H1 (cell line): ENCODE measurements at regions of chr6 and their contacts with region 1.

Region 1: GRCh38 chr6:24991810-24992467 is 56.2 kb upstream of the RIPOR2 start:
- DNase-seq: no peak
- H3K4me3 ChIP-seq: no peak overlapping the region
- H3K27ac ChIP-seq: no peak overlapping the region
- H3K4me1 ChIP-seq: peaks cover 0 to 7% (median 6%) of the 10 kb centered on the region in 4 experiments; a peak in 5 of 7 replicates
- H3K27me3 ChIP-seq: no peaks in the 10 kb centered on the region
- CTCF ChIP-seq: peak; percentile 38 to 84 (median 77)
- EP300 ChIP-seq: no peak
- POLR2A ChIP-seq: no peak
- RAD21 ChIP-seq: peak; percentile 76 to 89

Region 2: DNA sequence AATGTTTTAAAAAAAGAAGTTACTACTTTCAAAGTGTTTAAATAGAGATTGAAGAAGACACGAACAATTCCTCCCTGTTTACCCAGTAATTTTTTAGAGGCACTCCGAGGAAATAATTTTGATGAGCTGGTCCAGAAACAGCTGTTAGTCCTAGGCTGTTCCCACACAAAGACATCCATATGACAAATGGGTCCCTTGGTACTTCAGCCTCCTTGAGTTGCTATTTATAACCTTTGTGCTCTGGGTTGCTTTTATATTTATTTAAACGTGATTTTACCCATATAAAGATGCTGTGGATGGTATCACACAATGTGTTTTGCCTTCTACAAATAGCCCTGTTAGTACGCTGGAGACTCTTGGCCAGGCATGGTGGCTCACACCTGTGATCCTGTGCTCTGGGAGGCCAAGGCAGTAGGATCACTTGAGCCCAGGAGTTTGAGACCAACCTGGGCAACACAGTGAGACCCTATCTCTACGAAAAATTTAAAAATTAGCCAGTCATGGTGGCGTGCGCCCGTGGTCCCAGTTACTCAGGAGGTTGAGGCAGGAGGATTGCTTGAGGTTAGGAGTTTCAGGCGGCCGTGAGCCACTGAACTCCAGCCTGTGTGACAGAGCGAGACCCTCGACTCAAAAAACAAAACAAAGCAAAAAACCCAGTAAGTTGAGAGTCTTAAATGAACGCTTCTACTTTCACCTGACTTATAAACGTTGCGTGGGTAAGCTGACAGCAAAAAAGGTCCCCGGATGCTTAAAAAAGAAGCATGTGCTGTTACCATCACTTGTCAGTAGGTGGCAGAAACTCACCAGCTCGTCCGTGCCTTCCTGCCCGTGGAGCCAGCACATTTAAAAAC is 136.3 kb before region 1 on chr6:
- CTCF ChIA-PET with region 1: interaction called, 55 read pairs
- POLR2A ChIA-PET with region 1: interaction called, 3 read pairs
- DNase-seq: peak; percentile 41 to 59
- H3K4me3 ChIP-seq: no peak overlapping the region
- H3K27ac ChIP-seq: no peak overlapping the region
- H3K4me1 ChIP-seq: no peaks in the 10 kb centered on the region
- H3K27me3 ChIP-seq: no peaks in the 10 kb centered on the region
- CTCF ChIP-seq: peak; percentile 81 to 85 (median 83)
- EP300 ChIP-seq: no peak
- POLR2A ChIP-seq: no peak
- RAD21 ChIP-seq: peak; percentile 96 to 97

Region 3: GRCh38 chr6:24883618-24884017 is 108.3 kb before region 1 on chr6:
- CTCF ChIA-PET with region 1: interaction called, 20 read pairs
- POLR2A ChIA-PET with region 1: interaction called, 3 read pairs
- DNase-seq: no peak
- H3K4me3 ChIP-seq: no peak overlapping the region
- H3K27ac ChIP-seq: no peak overlapping the region
- H3K4me1 ChIP-seq: peaks cover 0 to 8% (median 3%) of the 10 kb centered on the region in 4 experiments; a peak in 3 of 7 replicates
- H3K27me3 ChIP-seq: no peaks in the 10 kb centered on the region
- CTCF ChIP-seq: no peak
- EP300 ChIP-seq: no peak
- POLR2A ChIP-seq: no peak
- RAD21 ChIP-seq: no peak

Region 4: DNA sequence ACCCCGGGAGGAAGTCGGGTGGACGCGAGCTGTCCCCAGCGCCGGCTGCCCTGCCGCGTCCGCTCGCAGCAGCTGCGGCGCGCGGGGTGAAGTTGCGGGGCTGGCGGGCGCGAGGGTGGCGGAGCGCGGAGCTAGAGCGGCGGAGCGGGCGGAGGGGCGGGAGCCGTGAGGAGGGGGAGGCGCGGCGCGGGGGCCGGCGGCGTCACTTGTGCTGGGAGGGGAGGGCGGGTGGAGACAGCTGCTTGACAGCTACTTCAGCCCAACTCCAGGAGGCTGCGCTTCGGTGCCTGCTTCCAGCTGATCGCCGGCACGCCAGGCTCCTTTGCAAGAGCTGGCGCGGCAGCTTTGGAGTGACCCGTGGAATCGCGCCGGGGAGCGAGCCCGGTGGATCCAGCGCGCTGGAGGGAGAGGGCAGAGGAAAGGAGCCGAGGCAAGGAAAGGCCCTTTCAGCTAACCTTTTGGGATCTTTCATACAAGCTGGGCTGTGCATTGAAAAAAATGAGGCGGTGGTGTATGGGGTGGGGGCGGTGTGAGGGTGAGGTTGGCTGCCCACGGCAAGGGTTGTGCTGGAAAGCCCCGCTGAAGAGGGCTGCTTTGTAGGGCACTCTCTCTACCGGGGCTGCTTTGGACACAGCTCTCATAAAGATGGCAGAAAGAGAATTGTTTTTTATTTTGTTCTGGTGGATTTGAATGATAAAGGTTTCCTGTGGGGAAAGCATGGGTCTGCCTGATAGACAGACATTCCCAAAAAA is 80.8 kb before region 1 on chr6:
- CTCF ChIA-PET with region 1: interaction called, 45 read pairs
- POLR2A ChIA-PET with region 1: interaction called, 6 read pairs
- DNase-seq: no peak
- H3K4me3 ChIP-seq: peak overlapping the region; percentile 57 to 79 (median 68)
- H3K27ac ChIP-seq: no peak overlapping the region
- H3K4me1 ChIP-seq: peaks cover 3 to 15% (median 12%) of the 10 kb centered on the region in 4 experiments; a peak in 6 of 7 replicates
- H3K27me3 ChIP-seq: peaks cover 0 to 29% (median 20%) of the 10 kb centered on the region in 4 experiments; a peak in 5 of 7 replicates
- CTCF ChIP-seq: no peak
- EP300 ChIP-seq: no peak
- POLR2A ChIP-seq: no peak
- RAD21 ChIP-seq: no peak

Region 5: DNA sequence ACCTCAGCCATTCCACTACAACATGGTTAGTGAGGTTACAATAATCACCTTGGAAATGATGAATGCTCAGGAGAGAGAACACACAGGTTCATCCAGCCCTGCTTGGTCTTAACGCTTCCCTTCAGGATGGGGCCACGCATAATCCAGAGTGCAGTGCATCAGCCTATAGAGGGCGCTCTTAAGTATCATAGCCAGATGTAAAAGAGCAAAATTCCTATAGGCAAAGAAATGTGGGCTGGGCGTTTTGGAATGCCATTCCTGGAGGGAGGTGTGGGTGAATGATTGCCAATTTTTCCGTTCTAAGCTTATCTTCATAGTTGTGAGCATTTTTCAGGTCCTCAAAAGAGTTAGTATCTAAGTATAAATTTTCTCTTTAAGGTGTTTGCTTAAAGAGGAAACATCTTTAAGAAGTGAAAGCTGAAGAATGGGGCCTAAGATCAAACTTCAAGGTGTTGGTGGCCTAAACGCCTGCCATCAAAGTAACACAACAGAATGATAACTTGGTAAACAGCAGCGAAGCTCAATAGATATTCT is 58.0 kb before region 1 on chr6:
- CTCF ChIA-PET with region 1: interaction called, 97 read pairs
- POLR2A ChIA-PET with region 1: interaction called, 3 read pairs
- DNase-seq: peak in 1 of 2 experiments; percentile 70
- H3K4me3 ChIP-seq: peak overlapping the region in 1 of 4 experiments; percentile 53; a peak in 2 of 8 replicates
- H3K27ac ChIP-seq: no peak overlapping the region
- H3K4me1 ChIP-seq: peaks cover 4 to 25% (median 19%) of the 10 kb centered on the region in 4 experiments; a peak in 6 of 7 replicates
- H3K27me3 ChIP-seq: no peaks in the 10 kb centered on the region; a peak in 1 of 7 replicates
- CTCF ChIP-seq: peak; percentile 57 to 91 (median 68)
- EP300 ChIP-seq: no peak
- POLR2A ChIP-seq: no peak
- RAD21 ChIP-seq: peak; percentile 49 to 69

Region 6: GRCh38 chr6:24980507-24981387 is 11.2 kb before region 1 on chr6:
- CTCF ChIA-PET with region 1: interaction called, 101 read pairs
- POLR2A ChIA-PET with region 1: interaction called, 29 read pairs
- DNase-seq: peak in 1 of 2 experiments; percentile 65
- H3K4me3 ChIP-seq: peak overlapping the region in 3 of 4 experiments; percentile 6 to 46 (median 13); a peak in 4 of 8 replicates
- H3K27ac ChIP-seq: peak overlapping the region; percentile 96
- H3K4me1 ChIP-seq: peaks cover 17 to 42% (median 31%) of the 10 kb centered on the region in 4 experiments; a peak in 6 of 7 replicates
- H3K27me3 ChIP-seq: no peaks in the 10 kb centered on the region
- CTCF ChIP-seq: no peak
- EP300 ChIP-seq: peak in 1 of 2 experiments; percentile 76; a peak in 1 of 3 replicates
- POLR2A ChIP-seq: peak; percentile 45 to 86
- RAD21 ChIP-seq: no peak; a peak in 1 of 4 replicates

Region 7: DNA sequence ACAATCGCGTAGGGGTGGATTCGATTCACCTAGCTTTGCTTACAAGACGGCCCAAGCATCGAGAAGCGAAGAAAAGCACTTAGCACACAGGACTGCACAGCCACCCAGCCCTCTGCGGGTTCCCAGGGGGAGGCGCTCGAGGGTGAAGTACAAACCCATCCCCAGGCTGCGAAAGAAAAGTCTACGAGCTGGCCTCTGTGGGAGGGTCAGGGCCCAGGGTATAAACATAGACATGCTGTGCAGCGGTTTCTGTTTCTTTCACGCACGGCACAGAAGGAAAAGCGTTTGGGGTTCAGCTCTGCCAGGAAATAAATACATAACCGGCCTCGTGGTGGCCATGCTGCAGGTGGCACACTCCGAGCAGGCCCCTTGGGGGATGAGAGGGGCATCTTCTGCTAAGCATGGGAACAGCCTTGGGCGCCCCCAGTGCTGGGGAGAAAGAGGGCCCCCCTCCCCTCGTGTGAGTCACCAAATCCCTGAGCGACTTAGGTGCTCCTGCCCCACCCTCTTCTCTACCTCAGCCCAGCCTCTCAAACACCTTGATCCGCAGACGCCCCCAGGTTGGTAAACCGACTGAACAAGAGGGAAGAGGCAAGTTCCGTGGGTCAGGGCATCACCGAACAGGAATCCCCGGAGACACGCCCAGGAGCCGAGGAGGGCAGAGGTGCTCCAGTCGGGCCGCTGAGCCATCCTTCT is 35.4 kb after region 1 on chr6:
- CTCF ChIA-PET with region 1: interaction called, 23 read pairs
- POLR2A ChIA-PET with region 1: no interaction called
- DNase-seq: no peak
- H3K4me3 ChIP-seq: no peak overlapping the region
- H3K27ac ChIP-seq: no peak overlapping the region
- H3K4me1 ChIP-seq: peaks cover 0 to 9% (median 0%) of the 10 kb centered on the region in 4 experiments; a peak in 3 of 7 replicates
- H3K27me3 ChIP-seq: no peaks in the 10 kb centered on the region
- CTCF ChIP-seq: peak; percentile 31 to 40 (median 33); a peak in 3 of 4 replicates
- EP300 ChIP-seq: no peak
- POLR2A ChIP-seq: no peak
- RAD21 ChIP-seq: peak; percentile 29 to 42; a peak in 3 of 4 replicates